IMR-90 (cell line): ENCODE measurements at regions of chr4 and their contacts with region 1.

Region 1: GRCh38 chr4:4780729-4781244 is 78.7 kb upstream of the MSX1 start:
- DNase-seq: peak; percentile 88
- ATAC-seq: peak; percentile 88
- H3K4me3 ChIP-seq: no peak overlapping the region
- H3K27ac ChIP-seq: no peak overlapping the region
- H3K4me1 ChIP-seq: peaks cover 3% of the 10 kb centered on the region; the same call in 1 of the 2 replicates
- H3K27me3 ChIP-seq: peaks cover 1% of the 10 kb centered on the region
- CTCF ChIP-seq: peak; percentile 32
- POLR2A ChIP-seq: no peak
- RAD21 ChIP-seq: peak; percentile 46

Region 2: GRCh38 chr4:3851211-3851610 is 929.6 kb before region 1 on chr4:
- CTCF ChIA-PET with region 1: no interaction called
- POLR2A ChIA-PET with region 1: no interaction called
- dilution Hi-C with region 1: no loop called
- in situ Hi-C with region 1: no loop called
- intact Hi-C with region 1: no loop called
- DNase-seq: peak; percentile 17
- ATAC-seq: peak; percentile 44; the same call in 1 of the 2 replicates
- H3K4me3 ChIP-seq: no peak overlapping the region
- H3K27ac ChIP-seq: no peak overlapping the region
- H3K4me1 ChIP-seq: no peaks in the 10 kb centered on the region
- H3K27me3 ChIP-seq: peaks cover 29% of the 10 kb centered on the region
- CTCF ChIP-seq: no peak
- POLR2A ChIP-seq: no peak
- RAD21 ChIP-seq: no peak

Region 3: DNA sequence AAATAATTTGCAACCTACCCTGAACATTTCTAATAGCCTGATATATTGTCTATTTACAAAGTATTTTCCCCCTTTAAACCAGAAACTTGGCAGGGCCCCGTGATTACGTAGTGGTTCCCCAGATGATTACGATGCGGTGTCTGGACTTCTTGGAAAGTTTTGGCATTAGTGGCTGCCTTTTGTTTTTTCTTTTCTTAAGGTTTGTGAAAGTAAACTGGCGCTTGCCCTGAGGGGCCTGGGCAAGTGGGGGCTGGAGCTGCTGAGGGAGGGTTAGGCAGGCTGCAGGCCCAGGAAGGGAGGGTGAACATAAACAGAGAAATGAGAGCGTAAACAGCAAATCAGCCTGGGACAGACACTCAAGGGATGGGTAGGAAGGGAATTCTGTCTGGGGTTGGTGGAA is 44.9 kb before region 1 on chr4:
- CTCF ChIA-PET with region 1: no interaction called
- POLR2A ChIA-PET with region 1: no interaction called
- dilution Hi-C with region 1: no loop called
- in situ Hi-C with region 1: no loop called
- intact Hi-C with region 1: loop called (anchors 2 kb)
- DNase-seq: peak; percentile 27
- ATAC-seq: peak; percentile 56
- H3K4me3 ChIP-seq: no peak overlapping the region
- H3K27ac ChIP-seq: no peak overlapping the region
- H3K4me1 ChIP-seq: peaks cover 1% of the 10 kb centered on the region; the same call in 1 of the 2 replicates
- H3K27me3 ChIP-seq: peaks cover 30% of the 10 kb centered on the region
- CTCF ChIP-seq: no peak
- POLR2A ChIP-seq: no peak
- RAD21 ChIP-seq: no peak